ENCODE measurements at regions of chr9 and their contacts with region 1.

Region 1: GRCh38 chr9:107465467-107466451 is 23.8 kb downstream of the KLF4 start:
- DNase-seq: no peak
- H3K4me3 ChIP-seq: peak overlapping the region; percentile 60 to 64
- H3K27ac ChIP-seq: peak overlapping the region; percentile 82
- H3K4me1 ChIP-seq: peaks cover 14% of the 10 kb centered on the region
- H3K27me3 ChIP-seq: no peaks in the 10 kb centered on the region
- CTCF ChIP-seq: peak; percentile 81 to 98 (median 82)
- POLR2A ChIP-seq: no peak

Region 2: DNA sequence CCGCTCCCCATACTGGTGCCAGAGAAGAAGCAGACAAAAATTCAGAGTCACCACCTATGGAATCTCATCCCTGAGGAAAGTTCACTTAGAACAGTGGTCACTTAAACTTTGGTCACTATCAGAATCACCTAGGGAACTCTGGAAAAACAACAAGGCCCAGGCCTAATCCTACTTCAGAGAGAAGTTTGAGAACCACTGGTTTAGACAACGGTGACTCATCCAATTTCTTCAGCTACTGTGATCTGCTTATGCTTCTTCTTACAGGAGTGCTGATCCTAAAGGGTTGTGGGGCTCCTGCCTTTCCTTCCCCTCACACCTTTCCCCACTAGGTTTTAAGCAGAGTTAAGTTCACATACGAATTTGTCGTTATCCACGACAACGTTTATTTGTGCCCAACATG is 218.5 kb after region 1 on chr9:
- intact Hi-C with region 1: no loop called
- DNase-seq: no peak
- H3K4me3 ChIP-seq: no peak overlapping the region
- H3K27ac ChIP-seq: no peak overlapping the region
- H3K4me1 ChIP-seq: no peaks in the 10 kb centered on the region
- H3K27me3 ChIP-seq: no peaks in the 10 kb centered on the region
- CTCF ChIP-seq: no peak
- POLR2A ChIP-seq: no peak

Region 3: DNA sequence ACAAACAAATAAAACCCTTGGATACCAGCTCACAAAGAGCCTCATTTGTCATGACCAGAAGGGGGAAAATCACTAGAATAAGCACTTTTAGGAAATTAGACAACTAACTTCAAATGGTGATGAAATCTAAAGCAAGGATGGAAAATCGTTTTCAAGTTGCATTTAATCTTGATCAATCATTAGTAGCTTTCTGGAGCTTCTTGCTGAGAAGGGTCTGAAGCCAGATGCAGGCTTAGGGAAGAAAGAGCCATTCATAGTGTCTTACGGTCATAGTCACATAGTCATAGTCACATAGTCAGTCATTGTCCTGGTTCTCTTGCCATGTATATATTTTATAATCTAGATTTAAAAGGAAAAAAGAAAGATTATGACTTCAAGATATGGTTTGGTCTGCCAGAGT is 779.6 kb after region 1 on chr9:
- intact Hi-C with region 1: no loop called
- DNase-seq: no peak
- H3K4me3 ChIP-seq: no peak overlapping the region
- H3K27ac ChIP-seq: no peak overlapping the region
- H3K4me1 ChIP-seq: no peaks in the 10 kb centered on the region
- H3K27me3 ChIP-seq: no peaks in the 10 kb centered on the region
- CTCF ChIP-seq: no peak
- POLR2A ChIP-seq: no peak

Region 4: GRCh38 chr9:108333530-108333983 is 867.8 kb after region 1 on chr9:
- intact Hi-C with region 1: loop called (anchors 10 kb)
- DNase-seq: no peak
- H3K4me3 ChIP-seq: no peak overlapping the region
- H3K27ac ChIP-seq: no peak overlapping the region
- H3K4me1 ChIP-seq: no peaks in the 10 kb centered on the region
- H3K27me3 ChIP-seq: no peaks in the 10 kb centered on the region
- CTCF ChIP-seq: no peak
- POLR2A ChIP-seq: no peak

Region 5: GRCh38 chr9:108565651-108566378 is 1100.1 kb after region 1 on chr9:
- intact Hi-C with region 1: loop called (anchors 5 kb)
- DNase-seq: no peak
- H3K4me3 ChIP-seq: no peak overlapping the region
- H3K27ac ChIP-seq: peak overlapping the region; percentile 47
- H3K4me1 ChIP-seq: peaks cover 25% of the 10 kb centered on the region
- H3K27me3 ChIP-seq: no peaks in the 10 kb centered on the region
- CTCF ChIP-seq: peak; percentile 75 to 89 (median 79)
- POLR2A ChIP-seq: no peak